Esophagus muscularis mucosa (tissue), 4 donors: ENCODE measurements at regions of chr2 and their contacts with region 1.

Region 1: GRCh38 chr2:237572021-237572741 is 5.8 kb downstream of the PRLH start:
- DNase-seq: no peak
- H3K4me3 ChIP-seq: peak overlapping the region in 2 of 4 donors; percentile 24 to 32
- H3K27ac ChIP-seq: no peak overlapping the region
- H3K4me1 ChIP-seq: peaks cover 15 to 30% (median 26%) of the 10 kb centered on the region in 4 donors
- H3K27me3 ChIP-seq: no peaks in the 10 kb centered on the region
- CTCF ChIP-seq: peak; percentile 99
- EP300 ChIP-seq: no peak
- POLR2A ChIP-seq: no peak

Region 2: DNA sequence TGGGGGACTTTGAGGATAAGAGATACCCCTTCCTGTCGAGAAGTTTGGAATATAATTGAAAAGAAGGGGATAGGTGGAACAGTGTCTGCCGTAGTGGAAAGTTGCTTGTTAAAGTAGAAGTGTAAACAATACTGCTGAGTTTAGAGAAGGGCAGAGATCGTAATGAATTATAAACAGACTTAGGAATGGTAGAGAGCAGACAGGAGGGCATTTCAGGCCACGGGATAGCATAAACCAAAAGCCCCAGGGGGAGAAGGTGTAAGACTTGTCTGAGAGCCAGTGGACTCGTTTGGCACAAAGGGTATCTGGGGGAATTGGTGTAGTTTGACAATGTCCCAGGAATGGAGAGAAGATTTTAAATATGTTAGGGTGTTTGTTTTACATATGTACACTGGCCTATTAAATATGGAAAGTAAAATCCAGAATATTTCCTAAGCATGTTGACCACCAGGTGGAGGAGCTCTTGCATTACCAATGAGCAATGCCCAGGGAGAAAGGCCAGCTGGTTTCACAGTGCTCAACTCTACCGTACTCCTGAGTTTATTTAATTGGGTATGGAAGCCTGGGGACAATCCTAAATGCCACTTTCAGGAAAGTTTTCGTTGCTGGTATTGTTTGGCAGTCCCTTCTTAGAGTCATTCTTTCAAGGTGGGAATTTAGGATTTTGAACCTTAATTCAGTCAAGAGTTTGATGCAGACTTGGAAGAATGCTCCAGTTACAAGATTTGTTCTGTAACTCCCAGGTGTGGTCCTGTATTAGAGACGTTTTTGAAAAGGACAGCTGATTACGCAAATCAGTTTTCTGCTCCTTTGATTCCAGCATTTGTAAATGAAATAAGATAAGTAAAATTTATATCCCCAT is 479.0 kb before region 1 on chr2:
- intact Hi-C with region 1: loop called (anchors 10 kb)
- DNase-seq: no peak
- H3K4me3 ChIP-seq: no peak overlapping the region
- H3K27ac ChIP-seq: peak overlapping the region; percentile 70 to 83 (median 77)
- H3K4me1 ChIP-seq: peaks cover 18 to 45% (median 41%) of the 10 kb centered on the region in 4 donors
- H3K27me3 ChIP-seq: no peaks in the 10 kb centered on the region
- CTCF ChIP-seq: peak; percentile 66 to 80 (median 66)
- EP300 ChIP-seq: no peak
- POLR2A ChIP-seq: no peak

Region 3: DNA sequence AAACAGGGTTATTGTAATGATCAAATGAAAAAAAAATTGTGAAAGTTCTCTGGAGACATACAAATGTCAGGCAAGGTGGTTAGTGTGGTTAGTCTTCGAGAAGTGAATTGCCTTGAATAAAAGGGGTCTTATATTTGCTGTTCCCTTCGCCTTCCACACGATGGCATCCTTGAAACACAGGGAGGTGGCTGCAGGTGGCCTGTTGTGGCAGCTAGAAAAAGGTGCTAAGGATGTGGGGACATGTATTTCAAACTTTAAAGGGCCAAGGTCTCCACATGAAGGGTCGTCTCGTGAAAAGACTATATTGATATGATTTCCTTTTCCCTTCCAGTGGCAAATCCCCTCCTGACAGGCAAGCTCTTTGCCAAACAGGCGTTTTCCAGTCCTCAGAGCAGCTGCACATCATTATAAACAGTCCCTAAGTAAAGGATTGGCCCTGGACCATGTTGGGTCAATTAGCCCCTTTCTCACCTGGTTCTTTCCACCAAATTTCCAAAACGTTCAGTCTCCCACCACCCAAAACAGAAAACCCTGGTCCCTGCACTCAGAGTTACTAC is 418.0 kb before region 1 on chr2:
- intact Hi-C with region 1: loop called (anchors 10 kb)
- DNase-seq: peak; percentile 47
- H3K4me3 ChIP-seq: no peak overlapping the region
- H3K27ac ChIP-seq: no peak overlapping the region
- H3K4me1 ChIP-seq: peaks cover 1 to 33% (median 26%) of the 10 kb centered on the region in 4 donors
- H3K27me3 ChIP-seq: no peaks in the 10 kb centered on the region
- CTCF ChIP-seq: peak; percentile 56 to 70 (median 67)
- EP300 ChIP-seq: no peak
- POLR2A ChIP-seq: no peak

Region 4: GRCh38 chr2:237413777-237414661 is 158.2 kb before region 1 on chr2 and contains the start of gene COL6A3:
- intact Hi-C with region 1: loop called (anchors 10 kb)
- DNase-seq: no peak
- H3K4me3 ChIP-seq: peak within 1 kb of the TSS; percentile 53 to 61 (median 58)
- H3K27ac ChIP-seq: peak within 1 kb of the TSS; percentile 90 to 95 (median 92)
- H3K4me1 ChIP-seq: peaks cover 0 to 52% (median 44%) of the 10 kb centered on the region in 4 donors
- H3K27me3 ChIP-seq: no peaks in the 10 kb centered on the region
- CTCF ChIP-seq: no peak
- EP300 ChIP-seq: no peak
- POLR2A ChIP-seq: no peak
- total RNA-seq, gene COL6A3: 96.2 to 350 (median 192) TPM

Region 5: GRCh38 chr2:237434866-237435311 is 137.3 kb before region 1 on chr2:
- intact Hi-C with region 1: no loop called
- DNase-seq: no peak
- H3K4me3 ChIP-seq: no peak overlapping the region
- H3K27ac ChIP-seq: peak overlapping the region; percentile 74 to 83 (median 78)
- H3K4me1 ChIP-seq: peaks cover 16 to 61% (median 51%) of the 10 kb centered on the region in 4 donors
- H3K27me3 ChIP-seq: no peaks in the 10 kb centered on the region
- CTCF ChIP-seq: no peak
- EP300 ChIP-seq: no peak
- POLR2A ChIP-seq: no peak

Region 6: GRCh38 chr2:237512774-237513466 is 59.3 kb before region 1 on chr2:
- intact Hi-C with region 1: loop called (anchors 1 kb)
- DNase-seq: peak; percentile 95
- H3K4me3 ChIP-seq: no peak overlapping the region
- H3K27ac ChIP-seq: peak overlapping the region in 2 of 4 donors; percentile 13 to 60
- H3K4me1 ChIP-seq: peaks cover 30 to 40% (median 34%) of the 10 kb centered on the region in 4 donors
- H3K27me3 ChIP-seq: no peaks in the 10 kb centered on the region
- CTCF ChIP-seq: peak; percentile 85 to 93 (median 89)
- EP300 ChIP-seq: no peak
- POLR2A ChIP-seq: no peak